Activated CD8-positive, alpha-beta T cell treated with anti-CD3 and anti-CD28 coated beads, Interleukin-2, amount 10 ng/mL, durations not matched to agents 7 days and 5 days (primary cell): ENCODE measurements at regions of chr17 and their contacts with region 1.

Region 1: GRCh38 chr17:63697341-63698286 is 2.3 kb downstream of the LIMD2 start:
- DNase-seq: peak; percentile 91
- ATAC-seq: peak; percentile 35
- H3K4me3 Mint-ChIP-seq: peak overlapping the region; percentile 96
- H3K27ac Mint-ChIP-seq: peak overlapping the region; percentile 98
- H3K4me1 Mint-ChIP-seq: peaks cover 59% of the 10 kb centered on the region
- H3K27me3 Mint-ChIP-seq: no peaks in the 10 kb centered on the region

Region 2: GRCh38 chr17:63621766-63622519 is 75.7 kb before region 1 on chr17 and contains the start of gene MAP3K3:
- CTCF ChIA-PET with region 1: interaction called, 5 read pairs
- POLR2A ChIA-PET with region 1: interaction called, 23 read pairs
- DNase-seq: peak; percentile 99
- ATAC-seq: peak; percentile 94
- H3K4me3 Mint-ChIP-seq: peak within 1 kb of the TSS; percentile 96
- H3K27ac Mint-ChIP-seq: peak within 1 kb of the TSS; percentile 89
- H3K4me1 Mint-ChIP-seq: peaks cover 32% of the 10 kb centered on the region
- H3K27me3 Mint-ChIP-seq: peaks cover 11% of the 10 kb centered on the region
- total RNA-seq, gene MAP3K3: 31.4 to 32.8 TPM

Region 3: DNA sequence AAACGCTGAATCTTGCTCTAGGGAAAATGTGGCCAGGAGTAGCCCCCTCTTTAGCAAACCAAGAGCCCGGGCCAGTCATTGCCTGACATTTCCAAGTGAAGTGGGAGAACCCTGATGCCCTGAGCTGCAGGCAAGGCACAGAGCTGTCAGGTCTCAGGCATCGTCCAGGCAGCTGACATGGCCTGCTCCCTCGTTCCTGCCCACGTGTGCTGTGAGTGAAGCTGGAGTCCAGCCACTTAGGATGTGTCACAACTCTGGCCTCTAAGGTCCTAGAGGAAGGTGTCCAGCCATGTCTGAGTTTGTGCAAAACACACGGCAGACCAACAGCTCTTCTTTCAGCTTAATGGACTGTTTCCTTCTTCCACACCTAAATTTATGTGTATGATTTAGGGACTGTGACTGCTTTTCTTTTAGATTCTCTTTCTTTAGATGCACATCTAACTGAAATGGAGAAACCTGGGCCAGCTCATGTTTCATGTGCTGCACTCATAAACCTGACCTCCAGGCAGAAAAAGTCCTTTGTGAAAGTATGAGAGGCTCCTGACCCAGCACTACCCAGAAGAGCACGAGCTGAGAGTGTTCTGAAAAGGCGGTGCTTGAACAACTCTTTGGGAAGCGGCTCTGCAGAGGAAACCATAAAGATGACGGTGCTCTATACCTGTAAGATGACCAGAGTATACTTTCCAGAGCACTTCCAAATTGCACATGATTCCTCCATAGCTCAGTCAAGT is 17.1 kb after region 1 on chr17:
- CTCF ChIA-PET with region 1: interaction called, 85 read pairs
- POLR2A ChIA-PET with region 1: interaction called, 150 read pairs
- DNase-seq: no peak
- ATAC-seq: no peak
- H3K4me3 Mint-ChIP-seq: no peak overlapping the region
- H3K27ac Mint-ChIP-seq: no peak overlapping the region
- H3K4me1 Mint-ChIP-seq: peaks cover 9% of the 10 kb centered on the region
- H3K27me3 Mint-ChIP-seq: no peaks in the 10 kb centered on the region

Region 4: DNA sequence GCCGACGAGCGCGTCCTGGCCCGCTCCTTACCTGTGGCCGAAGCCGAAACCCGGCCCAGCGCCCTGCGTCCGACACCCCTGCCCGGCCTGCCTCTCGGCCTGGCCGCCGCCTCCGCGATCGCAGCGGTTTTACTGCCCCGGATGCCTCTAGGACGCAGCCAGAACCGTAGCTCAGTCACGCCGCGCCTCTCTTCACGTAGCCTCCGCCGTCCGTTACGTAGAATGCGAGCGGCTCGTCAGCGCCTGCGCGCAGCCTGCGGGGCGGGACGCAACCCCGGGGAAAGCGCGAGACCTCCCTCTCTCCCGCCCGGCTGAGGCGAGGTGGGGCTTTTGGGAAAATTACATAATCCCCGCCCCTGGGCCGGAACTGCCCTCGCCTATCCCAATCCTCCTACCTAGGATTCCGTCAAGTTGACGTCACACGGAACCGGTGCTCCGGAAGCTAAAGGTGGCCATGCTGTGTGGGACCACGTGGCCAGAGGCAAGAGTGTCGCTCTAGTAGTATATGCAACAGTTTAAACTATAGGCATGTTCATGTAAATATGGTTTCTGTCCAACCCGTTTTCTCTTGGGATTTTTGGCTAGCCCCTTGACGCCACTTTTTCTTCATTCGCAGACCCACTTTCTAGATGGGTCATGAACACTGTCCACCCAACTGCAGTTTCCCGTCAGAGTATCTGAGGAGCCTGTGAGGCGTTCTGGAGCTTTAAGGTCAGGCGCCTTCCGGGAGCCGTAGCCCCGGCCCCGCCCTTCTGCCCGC is 75.9 kb after region 1 on chr17 and contains the start of gene CCDC47:
- CTCF ChIA-PET with region 1: interaction called, 15 read pairs
- POLR2A ChIA-PET with region 1: interaction called, 64 read pairs
- DNase-seq: peak; percentile 99
- ATAC-seq: peak; percentile 92
- H3K4me3 Mint-ChIP-seq: peak within 1 kb of the TSS; percentile 98
- H3K27ac Mint-ChIP-seq: peak within 1 kb of the TSS; percentile 100
- H3K4me1 Mint-ChIP-seq: peaks cover 49% of the 10 kb centered on the region
- H3K27me3 Mint-ChIP-seq: no peaks in the 10 kb centered on the region
- total RNA-seq, gene CCDC47: 59.4 to 61.1 TPM

Region 5: GRCh38 chr17:63827002-63827771 is 129.6 kb after region 1 on chr17 and contains the starts of genes FTSJ3 and PSMC5:
- CTCF ChIA-PET with region 1: interaction called, 4 read pairs
- POLR2A ChIA-PET with region 1: interaction called, 17 read pairs
- DNase-seq: peak; percentile 97
- ATAC-seq: peak; percentile 94
- H3K4me3 Mint-ChIP-seq: peak within 1 kb of the TSS; percentile 97
- H3K27ac Mint-ChIP-seq: peak within 1 kb of the TSS; percentile 100
- H3K4me1 Mint-ChIP-seq: peaks cover 81% of the 10 kb centered on the region
- H3K27me3 Mint-ChIP-seq: no peaks in the 10 kb centered on the region
- total RNA-seq, gene FTSJ3: 58.7 to 62.2 TPM
- total RNA-seq, gene PSMC5: 176 to 179 TPM